ENCODE measurements at regions of chr2 and their contacts with region 1.

Region 1: GRCh38 chr2:239035361-239036078 is 187.6 kb downstream of the TWIST2 start:
- DNase-seq: peak; percentile 78
- H3K4me3 Mint-ChIP-seq: no peak overlapping the region
- H3K27ac Mint-ChIP-seq: no peak overlapping the region
- H3K4me1 Mint-ChIP-seq: no peaks in the 10 kb centered on the region
- H3K27me3 Mint-ChIP-seq: peaks cover 64% of the 10 kb centered on the region
- CTCF ChIP-seq: peak; percentile 95

Region 2: DNA sequence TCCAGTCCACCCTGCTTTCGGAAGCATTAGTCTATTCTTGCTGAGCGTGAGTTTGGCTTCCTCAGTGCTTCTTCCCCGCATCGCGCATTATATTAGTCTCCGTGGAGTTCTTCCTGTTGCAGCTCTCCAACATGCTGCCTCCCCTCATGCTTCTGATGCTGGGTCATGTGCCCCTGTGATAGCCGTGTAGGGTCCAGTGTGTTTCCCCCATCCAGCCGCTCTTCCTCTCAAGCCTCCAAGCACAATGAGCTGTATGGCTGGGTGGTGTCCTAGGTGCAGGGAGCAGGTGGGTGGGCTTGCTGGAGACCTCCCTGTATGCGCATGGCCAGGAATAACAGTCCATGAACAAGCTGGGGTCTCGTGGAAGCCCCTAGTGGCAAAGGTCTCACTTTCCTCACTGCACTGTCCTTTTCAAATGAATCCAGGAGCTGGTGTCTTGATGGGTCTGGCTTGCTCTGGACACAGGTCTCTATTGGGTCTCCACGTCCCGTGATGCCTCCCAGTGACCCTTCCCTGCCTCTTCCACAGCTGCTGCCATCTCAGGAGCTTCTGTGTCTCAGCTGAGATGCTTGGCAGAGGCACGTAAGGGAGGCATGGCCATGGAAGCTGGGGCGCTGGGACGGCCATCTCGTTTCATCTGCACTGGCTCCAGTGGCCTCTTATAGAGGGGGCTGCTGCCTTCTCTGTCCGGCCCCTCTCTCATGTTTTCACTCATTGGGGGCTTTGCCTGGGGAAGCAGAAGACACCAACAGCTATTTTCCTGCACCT is 420.1 kb after region 1 on chr2:
- CTCF ChIA-PET with region 1: no interaction called
- intact Hi-C with region 1: no loop called
- DNase-seq: no peak
- H3K4me3 Mint-ChIP-seq: no peak overlapping the region
- H3K27ac Mint-ChIP-seq: no peak overlapping the region
- H3K4me1 Mint-ChIP-seq: no peaks in the 10 kb centered on the region
- H3K27me3 Mint-ChIP-seq: peaks cover 72% of the 10 kb centered on the region
- CTCF ChIP-seq: no peak

Region 3: DNA sequence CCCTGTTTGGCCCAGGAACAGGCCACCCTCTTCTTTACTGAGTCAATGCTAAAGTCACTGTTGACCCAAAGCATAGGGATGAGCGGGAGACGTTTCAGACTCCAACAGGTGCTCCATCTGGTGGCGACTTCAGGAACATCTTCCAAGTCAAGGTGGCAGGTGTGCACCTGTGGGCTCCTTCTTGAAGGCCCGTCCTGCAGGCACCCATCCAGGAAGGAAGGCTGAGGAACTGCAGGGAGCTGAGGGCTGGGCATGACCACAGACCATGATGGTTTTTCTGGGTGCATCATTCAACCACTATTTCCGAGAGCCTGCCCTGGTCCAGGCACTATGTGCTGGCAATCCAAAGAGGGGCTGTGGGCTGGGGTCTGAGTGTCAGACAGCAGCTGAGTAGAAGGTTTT is 846.8 kb after region 1 on chr2:
- CTCF ChIA-PET with region 1: interaction called, 3 read pairs
- intact Hi-C with region 1: loop called (anchors 10 kb)
- DNase-seq: peak; percentile 67
- H3K4me3 Mint-ChIP-seq: no peak overlapping the region
- H3K27ac Mint-ChIP-seq: no peak overlapping the region
- H3K4me1 Mint-ChIP-seq: no peaks in the 10 kb centered on the region
- H3K27me3 Mint-ChIP-seq: peaks cover 39% of the 10 kb centered on the region
- CTCF ChIP-seq: peak; percentile 64